PC-9 (cell line): ENCODE measurements at regions of chr9 and their contacts with region 1.

Region 1: DNA sequence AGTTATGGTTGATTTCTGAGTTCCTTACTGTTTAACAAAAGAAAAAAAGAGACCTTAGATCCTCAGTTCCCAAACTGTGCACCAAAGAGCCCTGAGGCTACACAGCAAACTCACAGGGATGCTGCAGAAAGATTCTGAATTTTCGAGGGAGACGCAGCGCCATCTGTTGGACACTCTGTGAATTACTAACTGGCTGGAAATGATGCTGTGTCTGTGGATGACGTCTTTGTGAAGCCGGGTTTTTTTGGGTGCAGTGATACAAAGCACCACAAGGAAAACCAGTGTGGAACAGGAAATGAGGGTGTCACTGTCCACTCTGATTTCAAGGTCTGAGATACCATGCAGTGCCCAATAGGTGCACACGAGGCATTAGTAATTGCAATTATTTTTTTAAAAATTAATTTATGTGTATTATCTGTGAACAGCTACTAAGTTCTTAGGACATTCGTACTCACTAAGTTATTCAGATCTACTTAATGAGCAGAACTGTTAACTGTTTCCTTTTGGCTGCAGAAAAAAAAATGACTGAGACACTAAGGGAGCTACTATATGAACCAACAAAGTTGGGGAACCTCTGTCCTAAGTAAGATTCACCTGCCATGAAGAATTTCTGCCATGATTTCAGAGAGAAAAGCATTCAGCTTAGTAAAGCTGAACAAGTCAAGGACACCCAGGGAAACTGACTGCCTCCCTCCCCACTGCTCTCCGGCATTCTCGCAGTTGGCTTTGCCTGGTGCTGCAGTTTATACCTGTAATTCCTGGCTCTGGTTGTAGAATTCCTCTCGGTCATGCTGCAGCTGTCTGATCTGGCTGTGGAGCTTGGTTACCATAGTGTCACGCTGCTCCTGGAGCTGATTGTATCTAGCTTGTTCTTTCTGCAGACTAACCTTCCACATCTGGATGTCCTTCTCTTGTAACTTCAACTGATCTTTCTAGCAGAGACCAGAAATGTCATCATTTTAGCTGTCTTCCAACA is 23.4 kb downstream of the SPACA9 start:
- DNase-seq: peak; percentile 69 to 78
- H3K4me3 ChIP-seq: no peak overlapping the region
- H3K27ac ChIP-seq: no peak overlapping the region
- H3K4me1 ChIP-seq: no peaks in the 10 kb centered on the region
- H3K27me3 ChIP-seq: no peaks in the 10 kb centered on the region
- CTCF ChIP-seq: peak; percentile 94

Region 2: DNA sequence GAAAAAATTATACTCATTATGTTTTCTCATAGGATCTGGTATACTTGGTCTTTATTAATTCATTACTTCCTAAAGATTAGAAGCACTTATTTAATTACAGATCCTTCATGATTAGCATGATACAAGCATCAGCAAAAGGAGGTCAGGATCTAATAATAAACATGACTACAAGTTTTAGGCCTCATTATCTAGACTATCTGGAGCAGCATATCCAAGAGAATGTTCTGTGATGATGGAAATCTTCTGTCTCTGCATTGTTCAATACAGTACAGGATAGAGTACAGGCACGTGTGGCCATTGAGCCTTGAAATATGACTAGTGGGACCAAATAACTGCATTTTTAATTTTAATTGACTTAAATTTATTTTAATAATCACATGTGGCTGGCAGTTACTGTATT is 568.6 kb before region 1 on chr9:
- CTCF ChIA-PET with region 1: no interaction called
- POLR2A ChIA-PET with region 1: interaction called, 17 read pairs
- intact Hi-C with region 1: no loop called
- DNase-seq: no peak
- H3K4me3 ChIP-seq: no peak overlapping the region
- H3K27ac ChIP-seq: no peak overlapping the region
- H3K4me1 ChIP-seq: no peaks in the 10 kb centered on the region
- H3K27me3 ChIP-seq: no peaks in the 10 kb centered on the region
- CTCF ChIP-seq: no peak

Region 3: GRCh38 chr9:132507746-132508469 is 394.2 kb before region 1 on chr9:
- CTCF ChIA-PET with region 1: no interaction called
- POLR2A ChIA-PET with region 1: no interaction called
- intact Hi-C with region 1: loop called (anchors 5 kb)
- DNase-seq: peak in 1 of 2 experiments; percentile 67
- H3K4me3 ChIP-seq: no peak overlapping the region
- H3K27ac ChIP-seq: no peak overlapping the region
- H3K4me1 ChIP-seq: no peaks in the 10 kb centered on the region
- H3K27me3 ChIP-seq: peaks cover 85% of the 10 kb centered on the region
- CTCF ChIP-seq: peak; percentile 87

Region 4: DNA sequence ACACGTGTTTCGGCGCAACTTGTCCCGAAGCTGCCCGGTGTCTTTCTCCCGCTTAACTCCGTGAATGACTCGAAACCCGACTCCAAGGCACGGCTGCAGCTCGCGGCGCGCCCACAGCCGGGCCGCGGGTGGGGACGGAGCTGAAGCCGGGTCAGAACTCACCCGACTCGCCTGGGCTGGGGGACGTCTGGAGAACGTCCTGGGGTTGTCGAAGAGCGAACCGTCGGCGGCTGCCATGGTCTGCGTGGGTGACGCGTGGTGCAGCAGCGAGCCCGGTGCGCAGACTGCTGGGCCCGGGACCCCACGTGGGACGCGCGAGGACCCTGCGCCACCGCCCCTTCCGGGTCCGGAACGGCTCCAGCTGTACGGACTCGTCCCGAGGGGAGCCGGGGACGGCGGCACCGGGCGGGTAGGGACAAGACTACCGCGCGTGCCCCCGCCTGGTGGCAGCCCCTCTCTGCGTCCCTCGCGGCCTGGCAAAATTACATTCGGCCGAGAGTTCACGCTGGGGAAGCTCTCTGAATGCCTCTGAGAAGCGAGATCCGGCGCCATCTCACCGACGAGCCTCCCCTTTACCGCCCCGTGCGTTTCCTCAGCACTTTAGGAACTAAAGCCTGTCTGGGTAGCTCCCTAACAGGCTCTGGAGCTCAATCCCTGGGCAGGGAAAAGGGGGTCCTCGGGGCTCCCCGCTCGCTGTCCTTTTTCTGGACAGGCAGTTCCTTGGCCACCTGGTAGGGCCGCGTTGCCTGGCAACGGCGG is 232.3 kb before region 1 on chr9 and contains the start of gene DDX31:
- CTCF ChIA-PET with region 1: no interaction called
- POLR2A ChIA-PET with region 1: no interaction called
- intact Hi-C with region 1: loop called (anchors 10 kb)
- DNase-seq: peak; percentile 63 to 86
- H3K4me3 ChIP-seq: peak within 1 kb of the TSS; percentile 85
- H3K27ac ChIP-seq: peak within 1 kb of the TSS; percentile 90
- H3K4me1 ChIP-seq: peaks cover 25% of the 10 kb centered on the region
- H3K27me3 ChIP-seq: no peaks in the 10 kb centered on the region
- CTCF ChIP-seq: no peak; the same call in 1 of the 2 replicates
- total RNA-seq, gene DDX31: 19.2 and 21.5 TPM in 2 replicates

Region 5: GRCh38 chr9:132806723-132807421 is 95.3 kb before region 1 on chr9:
- CTCF ChIA-PET with region 1: interaction called, 3 read pairs
- POLR2A ChIA-PET with region 1: no interaction called
- intact Hi-C with region 1: loop called (anchors 2 kb)
- DNase-seq: peak; percentile 78 to 83
- H3K4me3 ChIP-seq: no peak overlapping the region
- H3K27ac ChIP-seq: no peak overlapping the region
- H3K4me1 ChIP-seq: 0 out of 2 replicates have a peak, but pooled peaks cover 4% of the 10 kb centered on the region
- H3K27me3 ChIP-seq: peaks cover 3% of the 10 kb centered on the region; the same call in 1 of the 2 replicates
- CTCF ChIP-seq: no peak